Psoas muscle (tissue), 8 donors: ENCODE measurements at regions of chr16 and their contacts with region 1.

Region 1: DNA sequence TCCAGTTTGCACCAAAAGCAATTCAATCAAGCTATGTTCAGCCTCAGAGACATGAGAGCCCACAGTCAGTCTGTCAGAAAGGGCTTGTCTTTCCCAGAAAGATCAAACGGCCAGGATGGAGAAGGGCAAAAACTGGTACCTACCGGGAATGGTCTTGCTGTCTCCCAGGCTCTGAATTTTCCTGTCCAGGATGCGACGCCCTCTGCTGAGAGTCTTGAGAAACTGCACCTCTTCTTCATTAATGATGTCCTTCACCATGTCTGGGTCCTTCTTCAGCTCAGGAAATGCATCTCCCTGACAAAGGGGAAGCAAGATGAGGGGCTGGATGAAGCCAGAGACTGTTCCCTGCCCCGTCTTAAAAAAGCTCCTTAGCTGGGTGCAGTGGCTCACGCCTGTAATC is 15.8 kb upstream of the EXOSC6 start:
- DNase-seq: peak in 1 of 2 donors; percentile 26
- ATAC-seq: peak in 1 of 4 donors; percentile 47
- H3K4me3 ChIP-seq: no peak overlapping the region
- H3K27ac ChIP-seq: no peak overlapping the region
- H3K4me1 ChIP-seq: no peaks in the 10 kb centered on the region
- H3K27me3 ChIP-seq: no peaks in the 10 kb centered on the region
- CTCF ChIP-seq: peak; percentile 47

Region 2: DNA sequence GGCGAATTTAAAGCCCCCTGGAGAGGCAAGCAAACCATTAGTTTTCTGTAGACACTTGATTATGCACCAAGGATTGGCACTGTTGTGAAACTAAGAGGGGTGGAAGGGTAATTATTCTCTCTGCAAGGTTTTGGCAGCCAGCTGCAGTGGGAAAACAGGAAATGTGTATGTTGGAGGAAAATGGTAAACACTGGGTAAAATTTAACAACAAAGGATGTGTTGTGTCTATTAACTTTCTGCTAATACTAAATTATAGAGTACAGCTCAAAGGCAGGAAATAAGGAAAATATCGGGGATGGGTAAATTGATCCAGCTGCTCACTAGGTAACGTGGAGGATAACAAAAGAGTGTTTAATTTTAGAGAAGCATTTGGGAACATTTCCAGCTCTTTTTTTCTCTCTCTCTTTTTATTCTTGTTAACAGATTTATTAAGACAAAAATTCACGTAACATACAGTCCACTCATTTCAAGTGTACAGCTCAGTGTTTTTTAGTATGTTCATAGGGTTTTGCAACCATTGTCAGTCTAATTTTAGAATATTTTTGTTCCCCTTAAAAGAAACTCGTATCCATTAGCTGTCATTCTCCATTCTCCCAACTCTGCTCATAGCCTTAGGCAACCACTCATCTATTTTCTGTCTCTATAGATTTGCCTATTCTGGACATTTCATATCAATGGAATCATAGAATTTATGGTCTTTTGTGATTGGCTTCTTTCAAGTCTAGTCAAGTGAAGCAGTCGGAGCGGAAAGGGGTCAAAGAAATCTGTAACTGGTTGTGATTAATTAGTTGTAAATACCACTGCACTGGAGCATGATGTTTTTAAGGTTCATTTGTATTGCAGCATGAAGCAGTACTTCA is 1382.4 kb before region 1 on chr16:
- intact Hi-C with region 1: no loop called
- DNase-seq: no peak
- ATAC-seq: no peak
- H3K4me3 ChIP-seq: no peak overlapping the region
- H3K27ac ChIP-seq: no peak overlapping the region
- H3K4me1 ChIP-seq: no peaks in the 10 kb centered on the region
- H3K27me3 ChIP-seq: no peaks in the 10 kb centered on the region
- CTCF ChIP-seq: no peak

Region 3: GRCh38 chr16:70158261-70158939 is 109.1 kb before region 1 on chr16:
- intact Hi-C with region 1: loop called in 1 of 2 experiments (anchors 10 kb)
- DNase-seq: no peak
- ATAC-seq: no peak
- H3K4me3 ChIP-seq: no peak overlapping the region
- H3K27ac ChIP-seq: no peak overlapping the region
- H3K4me1 ChIP-seq: peaks cover 2% of the 10 kb centered on the region
- H3K27me3 ChIP-seq: no peaks in the 10 kb centered on the region
- CTCF ChIP-seq: no peak